Activated CD8-positive, alpha-beta T cell treated with anti-CD3 and anti-CD28 coated beads, Interleukin-2, amount 10 ng/mL, durations not matched to agents 7 days and 5 days (primary cell): ENCODE measurements at regions of chr14 and their contacts with region 1.

Region 1: GRCh38 chr14:61475316-61475715 is 153.9 kb downstream of the PRKCH start:
- DNase-seq: no peak
- ATAC-seq: no peak
- H3K4me3 Mint-ChIP-seq: peak overlapping the region; percentile 12
- H3K27ac Mint-ChIP-seq: peak overlapping the region; percentile 84
- H3K4me1 Mint-ChIP-seq: peaks cover 94% of the 10 kb centered on the region
- H3K27me3 Mint-ChIP-seq: no peaks in the 10 kb centered on the region

Region 2: GRCh38 chr14:61461808-61462275 is 13.5 kb before region 1 on chr14:
- CTCF ChIA-PET with region 1: interaction called, 136 read pairs
- POLR2A ChIA-PET with region 1: interaction called, 10 read pairs
- DNase-seq: peak; percentile 62
- ATAC-seq: peak; percentile 55
- H3K4me3 Mint-ChIP-seq: peak overlapping the region; percentile 3
- H3K27ac Mint-ChIP-seq: peak overlapping the region; percentile 91
- H3K4me1 Mint-ChIP-seq: peaks cover 71% of the 10 kb centered on the region
- H3K27me3 Mint-ChIP-seq: no peaks in the 10 kb centered on the region

Region 3: DNA sequence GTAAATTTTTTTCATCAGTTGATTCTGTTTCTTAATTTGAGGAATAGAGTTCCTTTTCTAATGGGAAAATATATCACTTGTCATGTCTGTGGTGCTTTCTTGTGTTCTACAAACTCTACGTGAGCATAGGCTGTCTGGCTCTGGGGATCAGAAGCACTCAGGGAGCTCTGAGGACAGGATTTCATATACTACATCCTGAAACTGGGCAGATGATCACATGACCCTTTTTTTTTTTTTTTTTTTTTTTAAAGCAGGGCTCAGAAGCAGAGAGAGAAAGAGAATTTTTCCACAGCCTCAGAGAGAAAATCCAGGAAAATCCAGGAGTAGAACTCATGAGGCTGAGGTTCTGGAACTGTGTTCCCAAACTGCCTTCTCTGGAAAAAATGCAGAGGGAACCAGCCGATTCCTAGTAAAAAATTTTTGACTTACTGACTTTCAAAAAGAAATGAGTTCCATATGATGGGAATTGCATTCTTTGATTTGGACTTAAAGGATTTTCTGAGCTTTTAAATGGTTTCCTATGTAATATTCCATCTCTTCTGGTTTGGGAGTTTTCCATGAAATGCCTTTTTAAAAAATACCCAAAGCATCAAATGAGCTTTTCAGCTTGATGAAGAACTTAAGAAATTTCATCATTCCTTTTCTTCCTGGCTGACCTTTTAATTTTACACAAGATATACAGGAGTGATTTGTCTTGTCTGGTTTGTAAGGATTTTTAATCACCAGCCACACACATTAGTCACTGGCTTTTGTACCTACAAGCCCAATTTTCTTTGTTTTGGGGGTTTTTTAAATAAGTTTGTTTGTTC is 36.9 kb after region 1 on chr14:
- CTCF ChIA-PET with region 1: interaction called, 88 read pairs
- POLR2A ChIA-PET with region 1: interaction called, 3 read pairs
- DNase-seq: no peak
- ATAC-seq: no peak
- H3K4me3 Mint-ChIP-seq: no peak overlapping the region
- H3K27ac Mint-ChIP-seq: peak overlapping the region; percentile 75
- H3K4me1 Mint-ChIP-seq: peaks cover 83% of the 10 kb centered on the region
- H3K27me3 Mint-ChIP-seq: no peaks in the 10 kb centered on the region

Region 4: DNA sequence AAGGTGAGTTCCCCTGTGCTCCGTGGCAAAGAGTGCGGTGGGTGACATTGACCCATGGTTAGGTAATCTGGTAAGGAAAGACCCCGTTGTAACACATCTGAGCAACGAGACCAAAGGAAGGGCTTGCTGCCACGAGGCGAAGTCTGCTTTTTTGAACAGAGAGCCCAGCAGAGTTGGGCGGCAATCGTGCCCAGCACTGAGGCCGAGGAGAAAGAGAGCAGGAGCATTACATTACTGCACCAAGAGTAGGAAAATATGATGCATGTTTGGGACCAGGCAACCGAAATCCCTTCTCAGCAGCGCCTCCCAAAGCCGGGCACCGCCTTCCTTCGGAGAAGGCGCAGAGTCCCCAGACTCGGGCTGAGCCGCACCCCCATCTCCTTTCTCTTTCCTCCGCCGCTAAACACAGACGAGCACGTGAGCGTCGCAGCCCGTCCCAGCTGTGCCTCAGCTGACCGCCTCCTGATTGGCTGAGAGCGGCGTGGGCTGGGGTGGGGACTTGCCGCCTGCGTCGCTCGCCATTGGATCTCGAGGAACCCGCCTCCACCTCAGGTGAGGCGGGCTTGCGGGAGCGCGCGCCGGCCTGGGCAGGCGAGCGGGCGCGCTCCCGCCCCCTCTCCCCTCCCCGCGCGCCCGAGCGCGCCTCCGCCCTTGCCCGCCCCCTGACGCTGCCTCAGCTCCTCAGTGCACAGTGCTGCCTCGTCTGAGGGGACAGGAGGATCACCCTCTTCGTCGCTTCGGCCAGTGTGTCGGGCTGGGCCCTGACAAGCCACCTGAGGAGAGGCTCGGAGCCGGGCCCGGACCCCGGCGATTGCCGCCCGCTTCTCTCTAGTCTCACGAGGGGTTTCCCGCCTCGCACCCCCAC is 219.7 kb after region 1 on chr14 and contains the start of gene HIF1A:
- CTCF ChIA-PET with region 1: interaction called, 30 read pairs
- POLR2A ChIA-PET with region 1: interaction called, 25 read pairs
- DNase-seq: peak; percentile 98
- ATAC-seq: peak; percentile 94
- H3K4me3 Mint-ChIP-seq: peak within 1 kb of the TSS; percentile 98
- H3K27ac Mint-ChIP-seq: peak within 1 kb of the TSS; percentile 96
- H3K4me1 Mint-ChIP-seq: peaks cover 56% of the 10 kb centered on the region
- H3K27me3 Mint-ChIP-seq: no peaks in the 10 kb centered on the region
- total RNA-seq, gene HIF1A: 119 to 132 TPM

Region 5: GRCh38 chr14:61719344-61720293 is 244.3 kb after region 1 on chr14:
- CTCF ChIA-PET with region 1: interaction called, 27 read pairs
- POLR2A ChIA-PET with region 1: no interaction called
- DNase-seq: no peak
- ATAC-seq: peak; percentile 72
- H3K4me3 Mint-ChIP-seq: peak overlapping the region; percentile 20
- H3K27ac Mint-ChIP-seq: peak overlapping the region; percentile 56
- H3K4me1 Mint-ChIP-seq: peaks cover 69% of the 10 kb centered on the region
- H3K27me3 Mint-ChIP-seq: no peaks in the 10 kb centered on the region